ENCODE measurements at regions of chr10 and their contacts with region 1.

Region 1: GRCh38 chr10:100562008-100562711 is 26.4 kb downstream of the HIF1AN start:
- DNase-seq: peak; percentile 55
- ATAC-seq: peak; percentile 82
- H3K4me3 ChIP-seq: no peak overlapping the region
- H3K27ac ChIP-seq: no peak overlapping the region
- H3K4me1 ChIP-seq: peaks cover 2% of the 10 kb centered on the region
- H3K27me3 ChIP-seq: peaks cover 36% of the 10 kb centered on the region
- CTCF ChIP-seq: peak; percentile 94
- POLR2A ChIP-seq: no peak; the same call in 1 of the 2 replicates
- RAD21 ChIP-seq: peak; percentile 88

Region 2: DNA sequence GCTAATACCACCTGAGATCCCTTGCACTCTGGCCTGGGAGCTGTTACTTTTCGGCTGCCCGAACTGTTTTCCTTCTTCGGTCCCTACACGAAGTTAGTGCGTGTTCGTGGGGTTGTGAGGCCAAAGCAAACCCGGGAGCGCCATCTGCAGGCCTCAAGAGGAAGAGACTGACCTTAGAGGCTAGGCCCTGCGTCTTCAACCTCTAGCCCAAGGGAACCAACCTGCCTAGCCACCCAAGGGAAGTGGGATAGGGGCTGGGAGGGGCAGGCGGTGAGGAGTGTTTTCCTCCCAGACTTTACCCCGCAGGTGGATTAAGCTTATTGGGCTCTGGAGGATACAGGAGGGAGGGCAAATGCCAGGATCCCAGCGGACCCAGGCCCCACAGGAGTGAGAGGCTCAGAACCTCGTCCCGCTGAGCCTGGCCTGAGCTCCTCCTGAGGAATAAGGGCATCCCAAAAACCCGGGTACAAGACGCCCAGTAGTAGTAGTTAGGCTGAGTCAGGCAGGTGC is 181.5 kb after region 1 on chr10:
- CTCF ChIA-PET with region 1: no interaction called
- POLR2A ChIA-PET with region 1: no interaction called
- dilution Hi-C with region 1: no loop called
- in situ Hi-C with region 1: no loop called
- intact Hi-C with region 1: loop called (anchors 5 kb)
- DNase-seq: peak; percentile 55
- ATAC-seq: no peak
- H3K4me3 ChIP-seq: no peak overlapping the region
- H3K27ac ChIP-seq: no peak overlapping the region
- H3K4me1 ChIP-seq: no peaks in the 10 kb centered on the region
- H3K27me3 ChIP-seq: peaks cover 95% of the 10 kb centered on the region
- CTCF ChIP-seq: peak; percentile 58
- POLR2A ChIP-seq: no peak
- RAD21 ChIP-seq: peak; percentile 66

Measured in IMR-90 (cell line).